Caco-2 (cell line): ENCODE measurements at regions of chr19 and their contacts with region 1.

Region 1: DNA sequence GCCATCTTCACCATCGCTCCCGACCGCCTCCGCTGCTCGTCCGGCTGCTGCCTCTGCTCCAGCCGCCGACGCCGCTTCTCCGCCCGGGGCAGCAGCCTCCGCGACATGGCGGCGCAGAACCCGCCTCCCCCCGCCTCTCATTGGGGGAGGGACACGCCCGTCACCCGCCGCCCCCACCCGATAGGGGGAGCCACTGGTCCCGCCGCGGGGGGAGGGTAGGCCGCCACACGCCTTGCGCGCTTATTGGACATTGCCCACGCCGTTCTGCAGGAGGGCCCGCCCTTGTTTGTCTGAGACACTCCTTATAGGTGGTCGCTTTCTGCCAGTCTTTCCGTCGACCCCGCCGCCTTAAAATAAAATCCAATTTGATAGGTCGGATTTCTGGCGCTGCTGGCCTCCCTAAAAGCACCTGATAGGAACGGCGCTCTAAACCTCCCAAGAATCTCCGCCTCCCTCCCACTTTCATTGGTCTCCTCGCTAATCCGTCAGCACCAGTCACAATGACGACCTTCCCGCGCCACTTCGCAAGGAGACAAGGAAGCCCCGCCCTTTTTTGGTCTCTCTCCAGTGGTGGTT is at the start of gene HNRNPL:
- DNase-seq: peak; percentile 100
- H3K4me3 ChIP-seq: peak within 1 kb of the TSS; percentile 66
- H3K4me3 Mint-ChIP-seq: peak within 1 kb of the TSS; percentile 98
- H3K27ac Mint-ChIP-seq: peak within 1 kb of the TSS; percentile 99
- H3K4me1 ChIP-seq: peaks cover 10% of the 10 kb centered on the region; the same call in 1 of the 2 replicates
- H3K4me1 Mint-ChIP-seq: peaks cover 16% of the 10 kb centered on the region
- H3K27me3 ChIP-seq: no peaks in the 10 kb centered on the region
- H3K27me3 Mint-ChIP-seq: no peaks in the 10 kb centered on the region
- CTCF ChIP-seq: peak; percentile 55 to 59
- total RNA-seq, gene HNRNPL: 443 and 446 TPM in 2 replicates

Region 2: GRCh38 chr19:38666663-38667511 is 183.1 kb before region 1 on chr19:
- CTCF ChIA-PET with region 1: no interaction called
- POLR2A ChIA-PET with region 1: no interaction called
- intact Hi-C with region 1: no loop called
- DNase-seq: no peak
- H3K4me3 ChIP-seq: no peak overlapping the region
- H3K4me3 Mint-ChIP-seq: peak overlapping the region; percentile 69
- H3K27ac Mint-ChIP-seq: peak overlapping the region; percentile 88
- H3K4me1 ChIP-seq: peaks cover 100% of the 10 kb centered on the region
- H3K4me1 Mint-ChIP-seq: peaks cover 86% of the 10 kb centered on the region
- H3K27me3 ChIP-seq: no peaks in the 10 kb centered on the region
- H3K27me3 Mint-ChIP-seq: no peaks in the 10 kb centered on the region
- CTCF ChIP-seq: no peak

Region 3: GRCh38 chr19:38721979-38722773 is 127.8 kb before region 1 on chr19:
- CTCF ChIA-PET with region 1: no interaction called
- POLR2A ChIA-PET with region 1: no interaction called
- intact Hi-C with region 1: no loop called
- DNase-seq: peak in 1 of 2 experiments; percentile 74
- H3K4me3 ChIP-seq: no peak overlapping the region
- H3K4me3 Mint-ChIP-seq: no peak overlapping the region
- H3K27ac Mint-ChIP-seq: peak overlapping the region; percentile 67
- H3K4me1 ChIP-seq: peaks cover 30% of the 10 kb centered on the region
- H3K4me1 Mint-ChIP-seq: peaks cover 5% of the 10 kb centered on the region
- H3K27me3 ChIP-seq: no peaks in the 10 kb centered on the region
- H3K27me3 Mint-ChIP-seq: no peaks in the 10 kb centered on the region
- CTCF ChIP-seq: no peak

Region 4: GRCh38 chr19:38741711-38742110 is 108.2 kb before region 1 on chr19:
- CTCF ChIA-PET with region 1: interaction called, 10 read pairs
- POLR2A ChIA-PET with region 1: no interaction called
- intact Hi-C with region 1: no loop called
- DNase-seq: peak in 1 of 2 experiments; percentile 25
- H3K4me3 ChIP-seq: no peak overlapping the region
- H3K4me3 Mint-ChIP-seq: no peak overlapping the region
- H3K27ac Mint-ChIP-seq: no peak overlapping the region
- H3K4me1 ChIP-seq: peaks cover 11% of the 10 kb centered on the region; the same call in 1 of the 2 replicates
- H3K4me1 Mint-ChIP-seq: peaks cover 6% of the 10 kb centered on the region
- H3K27me3 ChIP-seq: no peaks in the 10 kb centered on the region
- H3K27me3 Mint-ChIP-seq: no peaks in the 10 kb centered on the region
- CTCF ChIP-seq: no peak

Region 5: DNA sequence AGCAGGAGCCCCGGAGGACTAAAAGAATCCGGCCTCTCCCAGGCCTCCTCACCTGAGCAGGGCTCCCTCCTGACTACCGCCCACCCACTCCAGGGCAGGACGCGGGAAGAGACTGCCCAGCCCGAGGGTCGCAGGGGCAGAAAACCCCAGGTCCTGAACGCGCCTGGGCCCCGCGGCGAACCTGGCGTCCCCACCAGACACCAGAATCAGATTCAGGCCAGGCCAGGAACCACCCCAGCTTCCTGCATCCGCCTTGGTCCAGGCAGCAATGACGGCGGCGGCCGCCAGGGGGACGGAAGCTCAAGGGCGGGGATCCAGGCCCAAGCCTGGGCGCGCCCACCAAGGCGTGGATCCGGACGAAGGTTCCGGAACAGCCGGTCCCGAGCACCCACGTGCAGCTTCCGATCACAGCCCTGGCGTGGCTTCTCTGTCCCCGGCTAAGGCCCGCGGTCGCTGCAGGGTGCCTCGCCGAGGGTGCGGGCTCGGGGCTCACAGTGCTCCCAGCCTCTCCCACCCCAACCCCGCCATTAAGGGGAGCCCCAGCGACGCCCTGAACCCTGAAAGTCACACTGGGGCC is 80.2 kb before region 1 on chr19:
- CTCF ChIA-PET with region 1: no interaction called
- POLR2A ChIA-PET with region 1: no interaction called
- intact Hi-C with region 1: no loop called
- DNase-seq: peak in 1 of 2 experiments; percentile 44
- H3K4me3 ChIP-seq: no peak overlapping the region
- H3K4me3 Mint-ChIP-seq: no peak overlapping the region
- H3K27ac Mint-ChIP-seq: no peak overlapping the region
- H3K4me1 ChIP-seq: no peaks in the 10 kb centered on the region
- H3K4me1 Mint-ChIP-seq: no peaks in the 10 kb centered on the region
- H3K27me3 ChIP-seq: no peaks in the 10 kb centered on the region
- H3K27me3 Mint-ChIP-seq: no peaks in the 10 kb centered on the region
- CTCF ChIP-seq: no peak

Region 6: GRCh38 chr19:38792250-38793111 is 57.5 kb before region 1 on chr19:
- CTCF ChIA-PET with region 1: no interaction called
- POLR2A ChIA-PET with region 1: no interaction called
- intact Hi-C with region 1: no loop called
- DNase-seq: no peak
- H3K4me3 ChIP-seq: no peak overlapping the region
- H3K4me3 Mint-ChIP-seq: no peak overlapping the region
- H3K27ac Mint-ChIP-seq: no peak overlapping the region
- H3K4me1 ChIP-seq: 0 out of 2 replicates have a peak, but pooled peaks cover 6% of the 10 kb centered on the region
- H3K4me1 Mint-ChIP-seq: no peaks in the 10 kb centered on the region
- H3K27me3 ChIP-seq: no peaks in the 10 kb centered on the region
- H3K27me3 Mint-ChIP-seq: no peaks in the 10 kb centered on the region
- CTCF ChIP-seq: no peak

Region 7: GRCh38 chr19:38831142-38831605 is 18.8 kb before region 1 on chr19:
- CTCF ChIA-PET with region 1: no interaction called
- POLR2A ChIA-PET with region 1: interaction called, 33 read pairs
- intact Hi-C with region 1: no loop called
- DNase-seq: peak; percentile 91 to 96
- H3K4me3 ChIP-seq: peak overlapping the region; percentile 72
- H3K4me3 Mint-ChIP-seq: peak overlapping the region; percentile 71
- H3K27ac Mint-ChIP-seq: peak overlapping the region; percentile 97
- H3K4me1 ChIP-seq: peaks cover 22% of the 10 kb centered on the region
- H3K4me1 Mint-ChIP-seq: peaks cover 13% of the 10 kb centered on the region
- H3K27me3 ChIP-seq: no peaks in the 10 kb centered on the region
- H3K27me3 Mint-ChIP-seq: no peaks in the 10 kb centered on the region
- CTCF ChIP-seq: no peak

Region 8: DNA sequence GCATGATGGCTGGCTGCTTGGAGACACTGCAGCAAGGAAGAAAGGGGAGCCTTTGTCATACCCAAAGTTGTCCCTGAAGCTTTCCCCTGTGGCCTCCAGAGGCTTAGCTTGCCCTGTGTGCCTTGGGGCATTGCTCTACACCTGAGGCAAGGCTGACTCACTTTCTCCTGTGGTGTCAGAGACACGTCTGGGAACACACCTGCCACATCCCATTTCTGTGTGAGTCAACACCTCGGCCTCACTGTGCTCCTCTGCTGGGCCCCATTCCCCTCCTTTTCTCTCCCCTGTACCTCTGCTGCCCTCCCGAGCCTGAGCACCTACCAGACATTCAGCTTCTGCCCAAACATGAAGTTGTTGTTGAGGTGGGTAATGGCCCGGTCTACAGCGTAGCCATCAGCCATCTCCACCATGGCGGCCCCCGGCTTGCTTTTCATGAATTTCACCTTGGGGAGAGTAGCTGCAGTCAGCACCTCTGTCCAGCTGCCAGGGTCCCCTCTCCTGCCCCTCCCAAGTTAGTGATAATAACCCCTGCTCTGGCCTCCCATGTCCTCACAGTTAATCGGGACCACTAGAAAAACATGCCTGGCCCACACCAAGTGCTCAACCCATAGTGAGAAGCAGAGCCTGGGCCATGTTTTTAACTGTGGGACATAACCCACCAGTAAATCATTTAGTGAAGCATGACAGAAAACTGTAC is 11.2 kb before region 1 on chr19:
- CTCF ChIA-PET with region 1: no interaction called
- POLR2A ChIA-PET with region 1: interaction called, 18 read pairs
- intact Hi-C with region 1: no loop called
- DNase-seq: peak; percentile 59 to 80
- H3K4me3 ChIP-seq: no peak overlapping the region
- H3K4me3 Mint-ChIP-seq: peak overlapping the region; percentile 12
- H3K27ac Mint-ChIP-seq: peak overlapping the region; percentile 65
- H3K4me1 ChIP-seq: peaks cover 32% of the 10 kb centered on the region
- H3K4me1 Mint-ChIP-seq: peaks cover 25% of the 10 kb centered on the region
- H3K27me3 ChIP-seq: no peaks in the 10 kb centered on the region
- H3K27me3 Mint-ChIP-seq: no peaks in the 10 kb centered on the region
- CTCF ChIP-seq: peak in 1 of 2 experiments; percentile 13

Region 9: DNA sequence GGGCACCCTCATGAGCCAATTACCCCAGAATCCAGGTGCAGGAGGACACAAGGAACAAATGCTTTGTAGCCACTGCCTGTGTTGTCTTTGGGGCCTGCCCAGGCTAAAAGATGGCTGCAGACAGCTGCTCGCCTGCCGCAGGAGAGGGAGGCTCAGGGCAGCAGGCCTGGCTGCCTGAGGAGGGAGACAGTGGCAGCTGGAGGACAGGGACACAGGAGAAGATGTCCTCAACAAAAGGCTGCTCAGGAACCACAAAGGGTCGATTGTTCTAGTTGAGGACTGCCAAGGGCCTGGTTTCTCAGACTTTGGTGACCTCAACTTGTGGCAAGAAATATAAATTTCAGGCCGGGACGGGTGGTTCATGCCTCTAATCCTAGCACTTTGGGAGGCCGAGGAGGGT is 41.8 kb after region 1 on chr19:
- CTCF ChIA-PET with region 1: interaction called, 5 read pairs
- POLR2A ChIA-PET with region 1: interaction called, 3 read pairs
- intact Hi-C with region 1: loop called (anchors 1 kb)
- DNase-seq: no peak
- H3K4me3 ChIP-seq: no peak overlapping the region
- H3K4me3 Mint-ChIP-seq: no peak overlapping the region
- H3K27ac Mint-ChIP-seq: no peak overlapping the region
- H3K4me1 ChIP-seq: peaks cover 6% of the 10 kb centered on the region; the same call in 1 of the 2 replicates
- H3K4me1 Mint-ChIP-seq: no peaks in the 10 kb centered on the region
- H3K27me3 ChIP-seq: no peaks in the 10 kb centered on the region
- H3K27me3 Mint-ChIP-seq: no peaks in the 10 kb centered on the region
- CTCF ChIP-seq: no peak

Region 10: GRCh38 chr19:38899447-38900219 is 49.7 kb after region 1 on chr19 and contains the starts of genes NFKBIB and SIRT2:
- CTCF ChIA-PET with region 1: interaction called, 5 read pairs
- POLR2A ChIA-PET with region 1: interaction called, 27 read pairs
- intact Hi-C with region 1: loop called (anchors 1 kb)
- DNase-seq: peak; percentile 99 to 100
- H3K4me3 ChIP-seq: peak within 1 kb of the TSS; percentile 82
- H3K4me3 Mint-ChIP-seq: peak within 1 kb of the TSS; percentile 75
- H3K27ac Mint-ChIP-seq: peak within 1 kb of the TSS; percentile 69
- H3K4me1 ChIP-seq: peaks cover 18% of the 10 kb centered on the region
- H3K4me1 Mint-ChIP-seq: peaks cover 24% of the 10 kb centered on the region
- H3K27me3 ChIP-seq: no peaks in the 10 kb centered on the region
- H3K27me3 Mint-ChIP-seq: no peaks in the 10 kb centered on the region
- CTCF ChIP-seq: no peak
- total RNA-seq, gene NFKBIB: 43.9 and 52.6 TPM in 2 replicates
- total RNA-seq, gene SIRT2: 33.3 and 34.4 TPM in 2 replicates

Region 11: DNA sequence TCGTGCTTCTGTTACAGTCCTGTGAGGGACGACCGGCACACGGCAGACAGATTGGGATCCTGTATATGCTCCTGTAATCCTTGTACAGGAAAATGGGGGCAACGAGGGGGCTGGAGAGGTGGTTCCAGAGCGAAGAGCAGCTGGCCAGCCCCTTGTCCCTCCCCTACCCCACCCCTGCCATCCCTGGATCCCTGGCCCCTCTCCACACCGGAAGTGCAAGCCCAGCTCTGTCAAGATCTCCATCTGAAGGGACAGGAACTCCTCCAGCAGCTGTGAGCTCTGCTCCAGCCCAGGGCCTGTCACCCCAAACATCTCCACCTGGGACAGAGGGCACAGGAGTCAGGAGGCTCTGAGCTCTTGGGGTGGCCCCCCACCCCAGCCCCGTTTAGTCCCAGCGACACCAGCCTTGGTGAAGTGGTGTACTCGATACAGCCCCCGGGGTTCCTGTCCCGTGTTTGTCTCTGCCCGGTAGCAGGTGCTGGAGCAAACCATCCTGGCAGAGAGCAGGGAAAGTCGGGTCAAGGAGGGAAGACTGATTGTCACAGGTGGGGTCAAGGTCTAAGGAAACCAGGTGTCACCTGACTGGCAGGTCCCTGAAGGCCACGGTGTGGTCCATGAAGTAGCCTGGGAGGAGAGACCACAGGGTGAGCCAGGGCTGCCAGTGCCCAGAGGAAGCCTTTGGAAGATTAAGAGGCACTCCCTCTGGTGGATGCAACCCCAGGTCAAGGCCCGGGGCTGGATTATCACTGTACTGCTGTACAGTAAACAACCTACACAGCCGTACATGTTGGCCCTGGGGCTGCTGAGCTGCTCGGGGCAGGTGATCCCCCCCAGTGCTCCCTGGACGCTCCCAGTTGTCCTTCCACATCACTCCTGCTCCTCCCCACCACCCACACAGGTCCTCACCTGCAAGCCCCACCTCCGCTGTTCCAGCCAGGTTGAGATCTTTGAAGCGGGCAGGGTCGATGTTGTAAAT is 67.9 kb after region 1 on chr19:
- CTCF ChIA-PET with region 1: interaction called, 10 read pairs
- POLR2A ChIA-PET with region 1: no interaction called
- intact Hi-C with region 1: no loop called
- DNase-seq: peak; percentile 63 to 72
- H3K4me3 ChIP-seq: no peak overlapping the region
- H3K4me3 Mint-ChIP-seq: no peak overlapping the region
- H3K27ac Mint-ChIP-seq: no peak overlapping the region
- H3K4me1 ChIP-seq: no peaks in the 10 kb centered on the region
- H3K4me1 Mint-ChIP-seq: no peaks in the 10 kb centered on the region
- H3K27me3 ChIP-seq: no peaks in the 10 kb centered on the region
- H3K27me3 Mint-ChIP-seq: no peaks in the 10 kb centered on the region
- CTCF ChIP-seq: peak; percentile 47 to 52